ENCODE measurements at regions of chr7 and their contacts with region 1.

Region 1: DNA sequence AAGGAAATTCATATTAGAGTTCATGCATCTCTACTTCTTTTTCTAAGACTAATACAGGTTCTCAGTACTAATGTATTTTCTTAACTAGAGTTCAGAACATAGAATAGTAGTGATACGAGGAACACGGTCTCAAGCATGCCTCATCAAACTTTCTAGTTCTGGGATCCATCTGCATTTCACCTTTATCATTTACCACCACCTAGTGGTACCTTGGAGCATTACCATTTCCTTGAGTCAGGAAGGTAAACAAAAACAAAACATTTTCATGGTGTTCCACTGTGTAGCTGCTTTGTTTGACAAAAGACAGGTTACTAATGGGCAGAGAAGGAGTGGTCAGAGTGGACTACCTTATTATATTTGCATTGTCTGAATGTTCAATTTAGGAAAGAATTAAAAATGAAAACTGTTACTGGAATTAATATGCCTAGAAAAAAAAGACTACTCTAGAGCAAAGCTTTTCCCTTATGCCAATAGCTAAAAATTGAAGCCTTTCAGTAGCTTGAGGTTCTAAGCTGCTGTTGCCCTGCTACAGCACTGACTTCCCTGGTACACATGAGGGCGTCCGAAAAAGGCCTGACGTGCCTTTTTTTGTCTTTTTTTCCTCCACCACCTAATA is 44.5 kb downstream of the STARD3NL start:
- DNase-seq: peak in 1 of 2 experiments; percentile 20
- H3K4me3 ChIP-seq: no peak overlapping the region
- H3K27ac ChIP-seq: no peak overlapping the region
- H3K4me1 ChIP-seq: no peaks in the 10 kb centered on the region
- H3K27me3 ChIP-seq: no peaks in the 10 kb centered on the region
- CTCF ChIP-seq: peak; percentile 98

Region 2: DNA sequence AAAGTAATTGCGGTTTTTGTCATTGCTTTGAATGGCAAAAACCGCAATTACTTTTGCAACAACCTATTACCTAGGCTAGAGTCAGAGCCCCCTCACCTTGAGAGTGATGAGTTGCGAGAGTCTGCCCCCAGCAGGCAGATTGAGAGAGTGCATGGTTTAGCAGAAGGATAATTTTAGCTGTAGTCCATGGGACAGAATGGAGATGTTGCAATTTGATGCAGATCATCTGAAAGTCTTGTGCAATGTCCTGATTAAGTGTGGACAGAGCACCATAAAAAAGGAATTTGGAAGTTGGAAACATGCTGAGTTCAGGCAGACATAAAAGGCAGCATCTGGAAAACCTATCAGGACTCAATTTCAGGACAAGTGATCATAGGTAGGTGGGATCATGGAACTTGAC is 490.3 kb before region 1 on chr7:
- CTCF ChIA-PET with region 1: no interaction called
- POLR2A ChIA-PET with region 1: no interaction called
- intact Hi-C with region 1: no loop called
- DNase-seq: peak in 1 of 2 experiments; percentile 2
- H3K4me3 ChIP-seq: no peak overlapping the region
- H3K27ac ChIP-seq: no peak overlapping the region
- H3K4me1 ChIP-seq: no peaks in the 10 kb centered on the region
- H3K27me3 ChIP-seq: peaks cover 13% of the 10 kb centered on the region; the same call in 1 of the 2 replicates
- CTCF ChIP-seq: peak; percentile 52

Region 3: GRCh38 chr7:37901236-37901827 is 321.3 kb before region 1 on chr7:
- CTCF ChIA-PET with region 1: no interaction called
- POLR2A ChIA-PET with region 1: no interaction called
- intact Hi-C with region 1: loop called (anchors 5 kb)
- DNase-seq: no peak
- H3K4me3 ChIP-seq: no peak overlapping the region
- H3K27ac ChIP-seq: no peak overlapping the region
- H3K4me1 ChIP-seq: no peaks in the 10 kb centered on the region
- H3K27me3 ChIP-seq: no peaks in the 10 kb centered on the region; the same call in 1 of the 2 replicates
- CTCF ChIP-seq: peak; percentile 83

Region 4: GRCh38 chr7:37916673-37917660 is 305.6 kb before region 1 on chr7 and contains the start of gene SFRP4:
- CTCF ChIA-PET with region 1: no interaction called
- POLR2A ChIA-PET with region 1: no interaction called
- intact Hi-C with region 1: loop called (anchors 5 kb)
- DNase-seq: peak; percentile 14 to 43
- H3K4me3 ChIP-seq: no peak within 1 kb of the TSS
- H3K27ac ChIP-seq: no peak within 1 kb of the TSS
- H3K4me1 ChIP-seq: 0 out of 2 replicates have a peak, but pooled peaks cover 5% of the 10 kb centered on the region
- H3K27me3 ChIP-seq: no peaks in the 10 kb centered on the region
- CTCF ChIP-seq: peak; percentile 75
- total RNA-seq, gene SFRP4: not detected in 2 replicates

Region 5: DNA sequence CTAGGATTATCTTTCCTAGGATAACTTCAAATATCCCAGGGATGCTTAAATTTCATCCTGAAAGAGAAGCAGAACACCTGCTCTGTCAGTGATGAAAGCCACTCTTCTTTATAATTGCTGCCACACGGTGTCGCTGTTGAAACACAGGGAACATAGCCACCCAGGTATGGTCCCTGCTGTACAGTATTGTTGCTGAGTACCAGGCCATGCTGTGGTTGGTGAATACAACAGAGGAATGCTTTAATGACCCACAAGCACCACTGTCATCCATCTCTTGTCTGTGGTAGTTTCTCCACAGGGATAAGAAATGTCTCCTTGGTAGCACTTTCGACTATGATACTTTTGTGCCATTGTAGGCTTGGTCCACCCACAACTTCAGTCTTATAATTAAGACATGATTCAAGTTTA is 115.1 kb before region 1 on chr7:
- CTCF ChIA-PET with region 1: interaction called, 6 read pairs
- POLR2A ChIA-PET with region 1: no interaction called
- intact Hi-C with region 1: loop called (anchors 1 kb)
- DNase-seq: peak; percentile 47 to 59
- H3K4me3 ChIP-seq: no peak overlapping the region
- H3K27ac ChIP-seq: no peak overlapping the region
- H3K4me1 ChIP-seq: no peaks in the 10 kb centered on the region
- H3K27me3 ChIP-seq: peaks cover 20% of the 10 kb centered on the region; the same call in 1 of the 2 replicates
- CTCF ChIP-seq: peak; percentile 90

Region 6: GRCh38 chr7:38178004-38178694 is 44.4 kb before region 1 on chr7 and contains the start of gene STARD3NL:
- CTCF ChIA-PET with region 1: no interaction called
- POLR2A ChIA-PET with region 1: no interaction called
- intact Hi-C with region 1: loop called (anchors 2 kb)
- DNase-seq: peak; percentile 98 to 99
- H3K4me3 ChIP-seq: peak within 1 kb of the TSS; percentile 91
- H3K27ac ChIP-seq: peak within 1 kb of the TSS; percentile 43
- H3K4me1 ChIP-seq: peaks cover 9% of the 10 kb centered on the region
- H3K27me3 ChIP-seq: 0 out of 2 replicates have a peak, but pooled peaks cover 3% of the 10 kb centered on the region
- CTCF ChIP-seq: no peak
- total RNA-seq, gene STARD3NL: 30.2 and 41.4 TPM in 2 replicates

Region 7: DNA sequence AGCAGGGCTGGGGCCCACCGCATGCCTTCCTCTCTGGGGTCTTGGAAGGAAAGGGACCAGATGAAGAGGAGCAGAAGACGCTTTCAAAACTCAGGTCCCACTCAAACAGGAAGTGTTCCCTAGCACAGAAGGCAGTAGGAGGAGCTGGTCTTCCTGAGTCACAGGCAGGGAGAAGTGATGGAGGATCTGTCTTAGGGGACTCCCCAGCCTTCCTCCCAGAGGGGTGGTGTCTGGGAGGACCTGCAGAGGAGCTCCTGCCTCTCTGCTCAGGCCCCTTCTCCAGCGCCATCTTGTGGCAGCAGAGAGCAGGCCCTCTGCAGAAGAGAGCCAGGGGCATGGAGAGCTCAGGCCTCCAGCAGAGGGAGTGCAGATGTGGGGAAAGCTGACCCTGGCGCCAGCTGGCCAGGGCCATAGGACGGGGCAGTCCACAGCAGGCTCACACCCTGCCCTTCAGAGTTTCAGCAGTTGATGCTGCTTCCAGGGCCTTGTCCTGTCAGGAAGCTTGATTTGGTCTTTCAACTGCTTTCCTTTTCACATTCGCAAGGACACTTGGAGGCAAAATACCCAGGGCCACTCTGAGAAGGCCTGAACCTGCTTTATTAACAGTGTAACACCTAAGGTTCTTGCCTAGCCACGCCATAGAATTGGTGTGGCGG is 113.0 kb after region 1 on chr7:
- CTCF ChIA-PET with region 1: no interaction called
- POLR2A ChIA-PET with region 1: no interaction called
- intact Hi-C with region 1: loop called (anchors 10 kb)
- DNase-seq: peak; percentile 53 to 80
- H3K4me3 ChIP-seq: no peak overlapping the region
- H3K27ac ChIP-seq: no peak overlapping the region
- H3K4me1 ChIP-seq: no peaks in the 10 kb centered on the region
- H3K27me3 ChIP-seq: no peaks in the 10 kb centered on the region
- CTCF ChIP-seq: peak; percentile 68